Natural killer cell (primary cell): ENCODE measurements at regions of chr11 and their contacts with region 1.

Region 1: DNA sequence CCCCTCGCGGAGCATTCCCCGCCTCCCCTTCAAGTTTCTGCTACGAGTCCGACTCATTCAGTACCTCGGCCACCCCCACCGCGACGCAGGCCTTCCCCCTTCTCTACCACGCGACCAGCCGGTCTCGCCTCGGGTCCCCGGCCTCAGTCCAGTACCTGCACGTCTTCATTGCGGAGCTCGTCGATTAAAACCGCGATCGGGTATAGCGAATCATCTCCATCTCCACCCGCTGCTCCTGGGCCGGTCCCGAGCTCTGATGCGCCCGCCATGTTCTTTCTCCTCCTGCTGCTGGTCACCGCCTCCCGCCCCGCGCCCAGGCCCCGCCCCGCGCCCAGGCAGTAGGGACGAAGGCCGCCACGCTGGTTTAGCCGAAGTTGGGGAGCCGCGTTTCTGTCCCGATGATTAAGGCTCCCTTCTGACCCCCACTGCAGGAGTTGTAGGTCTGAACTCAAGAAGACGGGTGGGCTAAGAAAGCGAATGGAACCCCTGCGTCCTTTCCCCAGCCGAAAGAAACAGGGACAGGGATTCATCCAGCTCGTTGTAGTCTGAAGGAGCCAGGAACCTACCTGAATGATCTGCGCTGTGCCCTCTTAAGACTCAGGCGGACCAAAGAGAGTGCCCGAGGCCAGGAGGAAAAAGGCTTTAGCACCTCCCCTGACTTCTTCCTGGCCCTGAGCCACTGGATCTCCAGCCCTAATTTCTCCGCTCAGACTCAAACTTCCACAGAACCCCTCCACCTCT is at the start of gene PPP2R1B:
- DNase-seq: peak; percentile 65 to 82
- ATAC-seq: peak; percentile 98
- H3K4me3 ChIP-seq: peak within 1 kb of the TSS; percentile 93
- H3K4me3 Mint-ChIP-seq: peak within 1 kb of the TSS; percentile 100
- H3K27ac ChIP-seq: peak within 1 kb of the TSS; percentile 65
- H3K27ac Mint-ChIP-seq: peak within 1 kb of the TSS; percentile 77 to 83
- H3K4me1 ChIP-seq: peaks cover 7% of the 10 kb centered on the region
- H3K4me1 Mint-ChIP-seq: peaks cover 31 to 36% of the 10 kb centered on the region in 2 donors
- H3K27me3 ChIP-seq: no peaks in the 10 kb centered on the region
- H3K27me3 Mint-ChIP-seq: no peaks in the 10 kb centered on the region
- CTCF ChIP-seq: no peak
- total RNA-seq, gene PPP2R1B: 32.6 to 41.4 (median 40.8) TPM

Region 2: GRCh38 chr11:111601979-111602864 is 164.0 kb before region 1 on chr11 and contains the start of gene SIK2:
- intact Hi-C with region 1: loop called (anchors 2 kb)
- DNase-seq: peak; percentile 87 to 96
- ATAC-seq: peak; percentile 86 to 95 (median 90)
- H3K4me3 ChIP-seq: peak within 1 kb of the TSS; percentile 96
- H3K4me3 Mint-ChIP-seq: peak within 1 kb of the TSS; percentile 97
- H3K27ac ChIP-seq: peak within 1 kb of the TSS; percentile 97
- H3K27ac Mint-ChIP-seq: peak within 1 kb of the TSS; percentile 93 to 97
- H3K4me1 ChIP-seq: peaks cover 16% of the 10 kb centered on the region
- H3K4me1 Mint-ChIP-seq: peaks cover 24 to 30% of the 10 kb centered on the region in 2 donors
- H3K27me3 ChIP-seq: no peaks in the 10 kb centered on the region
- H3K27me3 Mint-ChIP-seq: no peaks in the 10 kb centered on the region
- CTCF ChIP-seq: peak; percentile 69
- total RNA-seq, gene SIK2: 7.1 to 14.3 (median 8.4) TPM

Region 3: DNA sequence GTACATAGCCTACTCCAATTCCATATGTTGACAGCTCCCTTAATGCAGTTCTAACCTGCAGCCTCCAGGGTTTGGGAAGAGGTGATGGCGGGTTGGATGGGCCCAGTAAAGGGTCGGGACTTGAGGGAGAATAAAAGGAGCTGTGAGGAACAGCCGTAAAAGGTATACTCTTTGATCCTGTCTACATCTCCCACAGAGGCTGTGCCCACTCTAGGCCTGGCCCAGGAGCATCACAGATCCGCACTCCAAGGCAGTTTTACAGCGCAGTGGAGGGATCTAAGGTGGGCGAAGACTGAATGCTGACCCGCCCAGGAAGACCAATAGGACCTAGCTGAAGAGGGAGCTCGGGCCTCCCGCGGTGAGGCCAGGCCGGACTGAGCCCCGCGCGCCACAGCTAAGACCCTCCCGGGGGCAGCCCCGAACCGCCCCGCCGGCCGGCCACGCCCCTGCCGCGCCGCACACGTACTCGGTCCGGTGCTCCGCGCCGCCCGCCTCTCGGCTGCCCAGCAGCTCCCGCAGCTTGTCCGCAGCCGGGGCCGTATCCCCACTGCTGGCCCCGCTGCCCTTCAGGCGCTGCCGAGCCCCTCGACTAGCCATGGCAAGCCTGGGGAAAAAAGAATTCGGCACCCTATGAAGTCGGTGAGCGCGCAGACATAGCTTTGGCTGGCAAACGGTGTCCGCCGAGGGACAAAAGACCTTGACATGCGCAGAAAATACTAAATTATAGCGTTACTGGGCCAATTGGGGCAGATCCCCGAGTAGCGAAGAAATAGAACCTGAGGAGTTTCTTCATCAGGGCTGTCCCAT is 104.8 kb after region 1 on chr11 and contains the start of gene ALG9:
- intact Hi-C with region 1: loop called (anchors 2 kb)
- DNase-seq: peak; percentile 87 to 93
- ATAC-seq: peak; percentile 87 to 90 (median 88)
- H3K4me3 ChIP-seq: peak within 1 kb of the TSS; percentile 63
- H3K4me3 Mint-ChIP-seq: peak within 1 kb of the TSS; percentile 86
- H3K27ac ChIP-seq: peak within 1 kb of the TSS; percentile 73
- H3K27ac Mint-ChIP-seq: peak within 1 kb of the TSS; percentile 86 to 94
- H3K4me1 ChIP-seq: peaks cover 9% of the 10 kb centered on the region
- H3K4me1 Mint-ChIP-seq: peaks cover 14 to 19% of the 10 kb centered on the region in 2 donors
- H3K27me3 ChIP-seq: no peaks in the 10 kb centered on the region
- H3K27me3 Mint-ChIP-seq: no peaks in the 10 kb centered on the region
- CTCF ChIP-seq: no peak
- total RNA-seq, gene ALG9: 30.6 to 37.1 (median 35.4) TPM

Region 4: DNA sequence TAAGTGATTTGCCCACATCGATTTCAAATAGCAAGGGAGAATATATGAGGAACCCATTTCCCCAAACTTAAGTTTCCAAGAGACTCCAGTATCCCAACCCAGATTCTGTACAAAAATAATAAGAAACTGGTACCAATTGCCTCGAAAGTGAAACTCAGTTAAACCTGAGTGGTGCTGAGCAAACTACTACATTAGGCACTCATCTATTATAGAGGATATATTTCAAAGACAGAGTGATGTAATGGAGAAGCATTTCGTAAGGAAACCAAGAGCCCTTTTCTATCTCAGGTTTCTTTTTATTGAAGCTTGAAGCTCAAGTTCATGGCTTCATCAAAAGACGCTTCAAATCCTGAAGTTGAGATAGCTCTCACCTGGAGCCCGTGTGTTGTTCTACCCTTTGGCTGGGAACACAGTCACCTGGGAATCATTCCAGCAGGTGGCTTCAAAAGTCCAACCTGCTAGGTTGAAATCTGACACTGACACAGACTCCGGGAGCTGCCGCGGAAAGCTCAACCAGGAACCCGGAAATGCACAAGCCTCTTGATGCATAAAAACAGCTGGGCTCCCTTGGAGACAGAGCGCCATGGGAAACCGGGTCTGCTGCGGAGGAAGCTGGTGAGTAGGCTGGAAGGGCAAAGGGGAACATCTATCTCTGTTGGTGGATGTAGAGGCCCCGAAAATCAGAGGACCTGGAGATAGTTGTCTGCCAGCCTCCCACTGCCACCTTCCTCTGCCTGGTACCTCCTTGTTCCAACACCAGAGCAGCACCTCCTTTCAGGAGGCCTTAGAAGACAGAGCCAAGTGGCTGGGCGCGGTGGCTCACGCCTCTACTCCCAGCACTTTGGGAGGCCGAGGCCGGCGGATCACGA is 152.4 kb after region 1 on chr11 and contains the start of gene C11orf52:
- intact Hi-C with region 1: no loop called
- DNase-seq: no peak
- ATAC-seq: no peak
- H3K4me3 ChIP-seq: no peak within 1 kb of the TSS
- H3K4me3 Mint-ChIP-seq: no peak within 1 kb of the TSS
- H3K27ac ChIP-seq: no peak within 1 kb of the TSS
- H3K27ac Mint-ChIP-seq: no peak within 1 kb of the TSS
- H3K4me1 ChIP-seq: no peaks in the 10 kb centered on the region
- H3K4me1 Mint-ChIP-seq: no peaks in the 10 kb centered on the region
- H3K27me3 ChIP-seq: peaks cover 8% of the 10 kb centered on the region
- H3K27me3 Mint-ChIP-seq: peaks cover 31 to 33% of the 10 kb centered on the region in 2 donors
- CTCF ChIP-seq: no peak
- total RNA-seq, gene C11orf52: not detected

Region 5: DNA sequence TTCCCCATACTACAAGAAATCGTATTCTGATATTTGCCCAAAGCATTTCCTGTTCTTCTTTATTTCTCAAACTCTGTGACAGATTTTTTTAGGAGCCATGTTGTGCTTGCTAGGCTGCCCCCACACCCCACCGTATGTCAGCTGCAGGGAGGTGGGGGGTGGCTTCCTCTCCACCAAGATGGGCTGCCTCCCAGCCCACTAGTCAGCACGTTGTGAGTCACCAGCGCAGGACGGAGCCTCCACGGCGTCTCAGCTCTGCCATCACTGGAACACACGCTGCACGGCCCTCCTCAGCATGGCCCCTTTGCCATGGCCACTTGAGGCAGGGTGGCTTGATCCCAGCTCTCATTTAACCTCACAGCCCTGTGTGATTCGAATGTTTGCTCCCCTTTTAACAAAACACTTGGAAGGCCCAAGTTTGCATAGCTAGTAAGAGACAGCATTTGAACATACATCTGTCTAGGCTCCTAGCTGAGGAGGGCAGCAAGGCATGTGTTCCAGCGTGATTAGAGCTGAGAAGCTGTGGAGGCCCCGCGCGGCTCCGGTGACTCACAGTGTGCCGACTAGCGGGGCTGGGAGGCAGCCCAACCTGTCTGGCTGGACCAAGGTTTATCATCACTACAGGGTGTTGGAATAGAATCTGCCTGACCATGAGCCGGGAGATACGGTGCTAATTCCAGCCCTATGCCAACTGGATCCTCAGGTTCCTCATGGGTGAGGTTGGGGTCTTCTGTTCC is 1014.3 kb after region 1 on chr11:
- intact Hi-C with region 1: no loop called
- DNase-seq: no peak
- ATAC-seq: no peak
- H3K4me3 ChIP-seq: no peak overlapping the region
- H3K4me3 Mint-ChIP-seq: no peak overlapping the region
- H3K27ac ChIP-seq: no peak overlapping the region
- H3K27ac Mint-ChIP-seq: no peak overlapping the region
- H3K4me1 ChIP-seq: no peaks in the 10 kb centered on the region
- H3K4me1 Mint-ChIP-seq: peaks cover 5% of the 10 kb centered on the region in 2 donors
- H3K27me3 ChIP-seq: no peaks in the 10 kb centered on the region
- H3K27me3 Mint-ChIP-seq: peaks cover 12 to 24% of the 10 kb centered on the region in 2 donors
- CTCF ChIP-seq: no peak